Activated CD4-positive, alpha-beta memory T cell treated with anti-CD3 and anti-CD28 coated beads, Interleukin-2, amount 10 ng/mL, durations not matched to agents 7 days and 5 days (primary cell): ENCODE measurements at regions of chr6 and their contacts with region 1.

Region 1: DNA sequence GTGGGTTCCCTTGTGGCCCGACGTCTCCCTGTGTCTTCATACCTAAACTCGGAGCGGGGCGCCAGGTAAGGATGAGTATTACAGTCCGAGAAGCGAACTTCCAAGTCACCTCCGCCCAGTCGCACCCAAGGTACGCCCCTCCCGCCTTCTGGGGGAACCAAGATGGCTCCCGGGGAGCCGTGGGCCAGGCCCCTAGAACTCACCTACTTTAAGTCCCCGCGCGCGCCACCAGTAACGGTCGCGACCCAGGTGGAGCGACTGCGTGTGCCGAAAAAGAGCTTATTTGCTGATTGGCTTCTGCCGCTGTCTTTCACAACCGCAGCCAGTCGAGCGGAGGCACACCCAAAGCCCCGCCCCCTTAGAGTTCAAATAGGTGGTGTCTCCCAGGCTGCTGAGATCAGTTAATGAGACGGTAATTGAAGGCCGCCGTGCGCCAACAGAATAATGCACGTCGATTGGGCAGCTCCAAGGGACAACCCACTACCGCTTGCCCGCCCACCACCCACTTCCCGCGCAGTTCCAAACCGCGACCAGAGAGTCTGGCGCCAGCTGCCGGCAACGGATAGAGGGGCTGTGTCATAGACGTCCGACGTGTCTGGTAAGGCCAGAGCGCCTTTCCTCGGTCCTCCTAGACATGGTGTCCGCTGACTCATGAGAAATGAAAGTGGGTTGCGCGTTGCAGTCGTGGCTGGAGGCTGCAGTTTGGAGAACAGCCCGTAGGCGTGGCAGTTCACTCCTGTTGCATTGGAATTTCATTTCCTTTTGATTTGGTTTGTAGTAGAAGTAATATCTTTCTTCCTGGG is at the start of gene MDC1:
- DNase-seq: peak; percentile 100
- H3K4me3 Mint-ChIP-seq: peak within 1 kb of the TSS; percentile 84
- H3K27ac Mint-ChIP-seq: peak within 1 kb of the TSS; percentile 99
- H3K4me1 Mint-ChIP-seq: peaks cover 62% of the 10 kb centered on the region
- H3K27me3 Mint-ChIP-seq: no peaks in the 10 kb centered on the region
- total RNA-seq, gene MDC1: 49.7 to 54.6 TPM

Region 2: GRCh38 chr6:30571075-30571768 is 146.0 kb before region 1 on chr6 and contains the start of gene ABCF1:
- CTCF ChIA-PET with region 1: no interaction called
- POLR2A ChIA-PET with region 1: interaction called, 11 read pairs
- DNase-seq: peak; percentile 99
- H3K4me3 Mint-ChIP-seq: peak within 1 kb of the TSS; percentile 97
- H3K27ac Mint-ChIP-seq: peak within 1 kb of the TSS; percentile 97
- H3K4me1 Mint-ChIP-seq: peaks cover 63% of the 10 kb centered on the region
- H3K27me3 Mint-ChIP-seq: no peaks in the 10 kb centered on the region
- total RNA-seq, gene ABCF1: 64.3 to 65.2 TPM

Region 3: DNA sequence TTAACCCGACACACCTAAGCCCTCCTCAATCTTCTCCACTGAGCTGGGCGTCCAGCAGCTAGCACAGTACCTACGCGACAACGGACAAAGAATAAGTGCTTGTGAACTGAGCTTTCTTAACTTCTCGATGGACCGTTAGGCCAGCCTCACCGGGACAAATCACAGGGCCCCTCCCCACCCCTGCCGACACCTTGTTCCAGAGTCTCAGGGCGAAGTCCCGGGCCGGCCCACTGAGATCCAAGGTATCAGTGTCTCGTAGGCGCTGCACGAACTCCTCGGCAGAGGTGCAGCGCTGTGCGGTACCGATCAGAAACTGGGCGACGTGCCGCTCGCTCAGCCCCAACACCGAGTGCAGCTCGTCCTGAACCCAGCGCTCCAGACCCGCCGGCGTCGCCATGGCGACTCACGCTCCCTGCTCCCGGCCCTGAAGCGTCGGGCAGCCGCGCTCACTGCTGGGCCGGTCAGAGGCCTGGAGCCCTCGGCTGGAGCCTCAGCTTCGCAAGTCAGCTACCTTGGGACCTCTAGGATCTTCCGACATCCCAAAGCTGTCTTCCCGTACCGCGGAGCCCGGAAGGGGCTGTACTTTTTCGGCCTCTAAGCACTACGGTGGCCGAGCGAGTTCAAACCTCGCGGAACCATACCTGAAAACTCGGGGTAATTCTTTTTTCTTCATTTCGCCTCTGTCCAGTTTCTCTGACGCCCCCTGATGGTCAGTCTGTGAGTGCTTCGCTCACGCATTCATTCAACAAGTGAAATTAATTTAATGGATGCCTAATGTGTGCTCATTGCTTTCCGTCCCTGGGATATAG is 44.6 kb before region 1 on chr6 and contains the start of gene DHX16:
- CTCF ChIA-PET with region 1: interaction called, 626 read pairs
- POLR2A ChIA-PET with region 1: interaction called, 31 read pairs
- DNase-seq: peak; percentile 92
- H3K4me3 Mint-ChIP-seq: peak within 1 kb of the TSS; percentile 89
- H3K27ac Mint-ChIP-seq: peak within 1 kb of the TSS; percentile 18
- H3K4me1 Mint-ChIP-seq: peaks cover 42% of the 10 kb centered on the region
- H3K27me3 Mint-ChIP-seq: no peaks in the 10 kb centered on the region
- total RNA-seq, gene DHX16: 35.6 to 37.6 TPM

Region 4: GRCh38 chr6:30678964-30679726 is 38.1 kb before region 1 on chr6:
- CTCF ChIA-PET with region 1: interaction called, 626 read pairs
- POLR2A ChIA-PET with region 1: interaction called, 561 read pairs
- DNase-seq: peak; percentile 93
- H3K4me3 Mint-ChIP-seq: peak overlapping the region; percentile 93
- H3K27ac Mint-ChIP-seq: peak overlapping the region; percentile 95
- H3K4me1 Mint-ChIP-seq: peaks cover 35% of the 10 kb centered on the region
- H3K27me3 Mint-ChIP-seq: no peaks in the 10 kb centered on the region

Region 5: GRCh38 chr6:30686908-30687658 is 30.2 kb before region 1 on chr6:
- CTCF ChIA-PET with region 1: interaction called, 626 read pairs
- POLR2A ChIA-PET with region 1: interaction called, 561 read pairs
- DNase-seq: peak; percentile 85
- H3K4me3 Mint-ChIP-seq: peak overlapping the region; percentile 93
- H3K27ac Mint-ChIP-seq: peak overlapping the region; percentile 94
- H3K4me1 Mint-ChIP-seq: peaks cover 42% of the 10 kb centered on the region
- H3K27me3 Mint-ChIP-seq: no peaks in the 10 kb centered on the region

Region 6: DNA sequence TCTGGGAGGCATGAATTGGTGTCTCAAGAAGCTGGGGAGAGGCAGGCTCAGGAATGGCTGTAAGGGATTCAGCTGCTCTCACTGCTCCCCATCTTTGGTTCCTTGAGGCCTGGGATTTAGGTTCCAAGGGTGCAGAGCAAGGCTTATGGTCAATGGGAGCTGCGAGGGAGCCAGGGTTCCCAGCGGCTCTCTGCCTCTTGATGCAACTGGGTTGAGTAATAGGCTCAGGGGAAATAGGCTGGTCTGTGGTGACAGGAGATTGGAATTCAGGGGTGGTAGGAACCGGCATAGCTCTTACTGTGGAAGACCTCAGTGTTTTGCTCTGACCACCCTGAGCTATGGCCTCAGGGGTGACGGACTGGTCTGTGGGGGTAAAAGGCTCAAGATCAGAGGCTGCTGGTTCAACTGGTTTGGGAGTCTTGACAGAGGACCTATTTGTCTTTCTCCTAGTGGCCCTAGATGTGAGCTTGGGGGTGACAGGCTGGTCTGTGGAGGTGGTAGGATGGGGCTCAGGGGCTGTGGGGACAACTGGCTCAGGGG is 13.4 kb before region 1 on chr6:
- CTCF ChIA-PET with region 1: interaction called, 6 read pairs
- POLR2A ChIA-PET with region 1: interaction called, 16 read pairs
- DNase-seq: no peak
- H3K4me3 Mint-ChIP-seq: no peak overlapping the region
- H3K27ac Mint-ChIP-seq: no peak overlapping the region
- H3K4me1 Mint-ChIP-seq: peaks cover 2% of the 10 kb centered on the region
- H3K27me3 Mint-ChIP-seq: no peaks in the 10 kb centered on the region